Naive thymus-derived CD4-positive, alpha-beta T cell (primary cell): ENCODE measurements at regions of chr12 and their contacts with region 1.

Region 1: DNA sequence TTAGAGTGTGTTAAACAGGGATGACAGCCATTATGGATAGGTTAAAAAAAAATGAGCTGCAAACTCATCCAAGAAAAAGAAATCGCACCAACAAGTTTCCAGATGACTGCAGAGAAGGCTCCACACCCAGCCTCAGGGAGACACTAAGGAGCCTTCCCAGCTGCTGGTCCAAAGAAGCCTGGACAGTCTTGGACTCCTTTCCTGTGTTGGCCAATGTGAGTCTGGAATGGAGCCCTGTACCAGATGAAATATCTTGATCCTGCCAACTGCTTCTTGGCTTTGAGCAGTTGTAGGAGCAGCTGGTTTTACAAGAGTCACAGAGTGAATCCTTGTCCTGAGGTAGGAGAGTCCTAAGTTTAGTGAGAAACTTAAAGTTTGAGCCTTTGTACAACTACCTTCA is 44.5 kb downstream of the SLC38A1 start:
- DNase-seq: no peak
- ATAC-seq: no peak
- H3K4me3 ChIP-seq: no peak overlapping the region
- H3K4me3 Mint-ChIP-seq: peak overlapping the region in 5 of 10 donors; percentile 12 to 58 (median 44)
- H3K27ac ChIP-seq: peak overlapping the region; percentile 29
- H3K27ac Mint-ChIP-seq: peak overlapping the region; percentile 15 to 99 (median 88)
- H3K4me1 ChIP-seq: peaks cover 47 to 58% of the 10 kb centered on the region in 2 donors
- H3K4me1 Mint-ChIP-seq: peaks cover 44 to 99% (median 90%) of the 10 kb centered on the region in 7 donors
- H3K27me3 ChIP-seq: no peaks in the 10 kb centered on the region
- H3K27me3 Mint-ChIP-seq: no peaks in the 10 kb centered on the region

Region 2: GRCh38 chr12:46124848-46125619 is 99.4 kb before region 1 on chr12:
- CTCF ChIA-PET with region 1: no interaction called
- POLR2A ChIA-PET with region 1: no interaction called
- intact Hi-C with region 1: no loop called
- DNase-seq: peak in 7 of 9 donors; percentile 45 to 68 (median 57)
- ATAC-seq: peak; percentile 99
- H3K4me3 ChIP-seq: no peak overlapping the region
- H3K4me3 Mint-ChIP-seq: peak overlapping the region in 9 of 10 donors; percentile 50 to 81 (median 67)
- H3K27ac ChIP-seq: no peak overlapping the region
- H3K27ac Mint-ChIP-seq: peak overlapping the region; percentile 40 to 93 (median 85)
- H3K4me1 ChIP-seq: peaks cover 0 to 3% of the 10 kb centered on the region in 2 donors
- H3K4me1 Mint-ChIP-seq: peaks cover 3 to 7% (median 6%) of the 10 kb centered on the region in 7 donors
- H3K27me3 ChIP-seq: no peaks in the 10 kb centered on the region
- H3K27me3 Mint-ChIP-seq: peaks cover 0 to 45% (median 0%) of the 10 kb centered on the region in 5 donors

Region 3: GRCh38 chr12:46209914-46210872 is 14.2 kb before region 1 on chr12:
- CTCF ChIA-PET with region 1: no interaction called
- POLR2A ChIA-PET with region 1: interaction called, 73 read pairs
- intact Hi-C with region 1: loop called (anchors 2 kb)
- DNase-seq: peak in 8 of 9 donors; percentile 47 to 81 (median 68)
- ATAC-seq: peak; percentile 66
- H3K4me3 ChIP-seq: no peak overlapping the region
- H3K4me3 Mint-ChIP-seq: peak overlapping the region; percentile 47 to 76 (median 69)
- H3K27ac ChIP-seq: peak overlapping the region; percentile 78
- H3K27ac Mint-ChIP-seq: peak overlapping the region; percentile 89 to 100 (median 98)
- H3K4me1 ChIP-seq: peaks cover 65 to 72% of the 10 kb centered on the region in 2 donors
- H3K4me1 Mint-ChIP-seq: peaks cover 45 to 98% (median 96%) of the 10 kb centered on the region in 7 donors
- H3K27me3 ChIP-seq: no peaks in the 10 kb centered on the region
- H3K27me3 Mint-ChIP-seq: no peaks in the 10 kb centered on the region

Region 4: GRCh38 chr12:46237371-46238045 is 13.1 kb after region 1 on chr12:
- CTCF ChIA-PET with region 1: no interaction called
- POLR2A ChIA-PET with region 1: interaction called, 5 read pairs
- intact Hi-C with region 1: loop called in 1 of 2 experiments (anchors 2 kb)
- DNase-seq: no peak
- ATAC-seq: peak; percentile 69
- H3K4me3 ChIP-seq: no peak overlapping the region
- H3K4me3 Mint-ChIP-seq: peak overlapping the region in 3 of 10 donors; percentile 11 to 42 (median 32)
- H3K27ac ChIP-seq: no peak overlapping the region
- H3K27ac Mint-ChIP-seq: peak overlapping the region in 8 of 9 donors; percentile 41 to 82 (median 78)
- H3K4me1 ChIP-seq: peaks cover 19 to 53% of the 10 kb centered on the region in 2 donors
- H3K4me1 Mint-ChIP-seq: peaks cover 37 to 92% (median 88%) of the 10 kb centered on the region in 7 donors
- H3K27me3 ChIP-seq: no peaks in the 10 kb centered on the region
- H3K27me3 Mint-ChIP-seq: no peaks in the 10 kb centered on the region

Region 5: GRCh38 chr12:46244273-46244915 is 20.0 kb after region 1 on chr12:
- CTCF ChIA-PET with region 1: no interaction called
- POLR2A ChIA-PET with region 1: interaction called, 4 read pairs
- intact Hi-C with region 1: loop called in 1 of 2 experiments (anchors 2 kb)
- DNase-seq: no peak
- ATAC-seq: peak; percentile 12
- H3K4me3 ChIP-seq: no peak overlapping the region
- H3K4me3 Mint-ChIP-seq: peak overlapping the region in 6 of 10 donors; percentile 13 to 68 (median 42)
- H3K27ac ChIP-seq: no peak overlapping the region
- H3K27ac Mint-ChIP-seq: peak overlapping the region; percentile 33 to 88 (median 58)
- H3K4me1 ChIP-seq: peaks cover 30 to 44% of the 10 kb centered on the region in 2 donors
- H3K4me1 Mint-ChIP-seq: peaks cover 62 to 100% (median 88%) of the 10 kb centered on the region in 7 donors
- H3K27me3 ChIP-seq: no peaks in the 10 kb centered on the region
- H3K27me3 Mint-ChIP-seq: no peaks in the 10 kb centered on the region